GM10248 (cell line): ENCODE measurements at regions of chr17 and their contacts with region 1.

Region 1: DNA sequence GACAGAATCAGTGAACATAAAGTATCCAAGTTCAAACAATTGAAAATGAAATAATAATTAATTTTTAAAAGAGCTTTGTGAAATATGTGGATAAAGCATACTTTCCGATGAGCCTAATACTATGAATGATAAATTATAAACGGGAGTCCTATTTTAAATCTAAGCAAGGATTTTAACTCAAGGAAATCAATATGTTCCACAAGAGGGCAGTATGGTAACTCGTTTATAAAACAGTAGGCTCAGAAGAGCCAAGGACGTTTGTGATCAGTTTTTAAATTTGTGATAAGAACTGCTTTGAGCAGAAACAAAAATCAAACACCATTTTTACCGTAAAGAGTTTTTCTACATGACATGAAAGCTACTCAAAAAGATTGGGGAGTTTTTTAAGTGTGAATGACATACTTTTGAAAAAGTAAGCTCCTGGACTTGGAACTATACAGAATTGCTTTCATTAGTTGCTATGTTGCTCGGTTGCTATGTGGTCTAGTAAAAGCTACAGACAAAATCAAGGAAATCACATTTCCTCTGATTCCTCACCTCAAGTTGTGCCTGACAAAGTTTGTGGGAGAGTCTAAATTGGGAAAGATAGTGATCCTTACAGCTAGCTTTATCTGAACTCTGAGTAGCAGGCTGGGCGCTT is 11.8 kb upstream of the TEKT1 start:
- DNase-seq: peak; percentile 47
- CTCF ChIP-seq: peak; percentile 47

Region 2: DNA sequence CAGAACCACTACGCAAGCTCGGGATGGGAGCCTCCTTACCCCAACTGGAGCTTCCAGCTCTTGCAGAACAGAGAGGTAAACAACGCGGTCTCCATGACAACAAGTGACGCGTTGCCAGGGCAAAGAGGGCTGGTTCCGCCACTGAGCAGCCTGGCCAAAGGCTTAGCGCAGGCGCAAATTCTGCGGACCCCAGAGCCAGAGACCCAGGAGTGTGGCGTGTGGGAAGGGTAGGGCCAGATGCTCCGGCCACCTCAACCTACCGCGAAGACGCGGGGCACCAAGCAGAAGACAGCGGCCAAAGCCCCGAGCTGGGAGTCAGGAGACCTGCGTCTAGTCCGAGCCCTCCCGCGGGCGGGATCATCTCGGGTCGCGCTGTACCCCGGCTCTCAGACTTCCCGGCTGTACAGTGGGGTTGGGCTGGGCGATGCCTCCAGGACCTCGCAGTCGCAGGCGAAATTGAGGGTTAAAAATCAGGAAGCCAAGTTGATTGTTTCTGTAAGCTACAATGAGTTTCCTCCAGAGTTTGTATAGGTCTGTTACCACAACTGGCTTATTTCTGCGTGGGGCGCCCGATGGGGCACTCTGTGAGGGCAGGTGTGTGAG is 11.6 kb before region 1 on chr17 and contains the start of gene TEKT1:
- CTCF ChIA-PET with region 1: interaction called, 33 read pairs
- POLR2A ChIA-PET with region 1: no interaction called
- DNase-seq: peak; percentile 83
- CTCF ChIP-seq: no peak

Region 3: DNA sequence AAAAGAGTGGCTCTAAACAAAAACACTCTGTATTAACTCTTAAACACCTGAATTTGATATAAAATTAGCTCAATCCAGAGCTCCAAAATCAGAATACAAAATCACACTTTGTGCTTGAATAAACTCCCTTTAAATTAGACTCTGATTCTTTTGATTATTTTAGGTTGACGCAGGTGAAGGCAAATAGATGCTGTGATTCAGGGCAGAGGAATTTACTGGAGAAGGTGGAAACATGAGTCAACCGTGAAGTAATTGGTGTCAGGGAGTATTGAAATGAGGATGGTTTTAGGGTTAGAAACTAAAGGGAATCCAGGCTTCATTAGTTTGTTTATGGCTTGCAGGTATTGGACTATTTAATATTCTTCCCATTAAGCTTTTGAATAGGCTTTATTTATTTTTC is 25.2 kb after region 1 on chr17:
- CTCF ChIA-PET with region 1: interaction called, 31 read pairs
- POLR2A ChIA-PET with region 1: no interaction called
- DNase-seq: no peak
- CTCF ChIP-seq: no peak

Region 4: GRCh38 chr17:6936370-6937028 is 93.1 kb after region 1 on chr17:
- CTCF ChIA-PET with region 1: no interaction called
- POLR2A ChIA-PET with region 1: no interaction called
- DNase-seq: no peak
- CTCF ChIP-seq: no peak

Region 5: DNA sequence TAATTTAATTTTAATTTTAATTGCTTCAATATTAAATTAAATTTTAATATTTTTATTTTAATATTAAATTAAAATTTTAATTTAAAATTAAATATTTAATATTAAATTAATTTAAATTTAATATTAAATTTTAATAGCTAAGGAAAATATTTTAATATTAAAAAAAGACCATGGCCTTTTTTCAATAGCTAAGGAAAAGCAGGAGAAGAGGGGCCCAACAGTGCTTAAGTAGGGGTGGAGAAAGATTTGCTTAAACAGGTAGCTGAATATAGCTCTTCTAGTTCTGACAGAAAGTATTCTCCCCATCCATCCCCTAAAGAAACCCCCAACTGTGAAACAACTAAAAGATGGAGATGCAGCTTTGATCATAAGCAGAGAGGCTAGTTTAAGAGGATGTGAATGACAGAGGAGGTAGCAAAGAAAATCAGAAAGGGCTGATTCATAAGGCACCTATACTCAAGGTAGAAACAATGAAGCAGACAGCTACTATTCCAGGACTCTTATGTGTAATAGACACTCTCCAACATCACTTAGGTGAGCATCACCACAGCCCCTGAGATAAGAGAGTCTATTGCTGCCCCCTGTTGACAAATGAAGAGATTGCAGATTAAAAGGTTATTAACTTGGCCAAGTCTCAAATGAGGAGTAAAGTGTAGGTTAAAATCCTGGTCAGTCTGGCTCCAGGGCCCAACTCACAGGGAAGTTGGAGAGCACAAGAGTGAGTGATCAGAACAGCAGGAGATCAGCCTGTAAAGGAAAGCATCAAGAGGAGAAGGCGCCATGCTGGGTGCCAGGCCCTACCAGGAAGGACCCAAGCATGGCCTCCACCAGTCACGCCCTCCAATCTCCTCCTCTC is 161.3 kb after region 1 on chr17:
- CTCF ChIA-PET with region 1: interaction called, 87 read pairs
- POLR2A ChIA-PET with region 1: no interaction called
- DNase-seq: peak; percentile 69
- CTCF ChIP-seq: peak; percentile 59